PC-9 (cell line): ENCODE measurements at regions of chr10 and their contacts with region 1.

Region 1: GRCh38 chr10:35563261-35563891 is 41.8 kb upstream of the GJD4 start:
- DNase-seq: peak in 1 of 2 experiments; percentile 52
- H3K4me3 ChIP-seq: no peak overlapping the region
- H3K27ac ChIP-seq: no peak overlapping the region
- H3K4me1 ChIP-seq: no peaks in the 10 kb centered on the region
- H3K27me3 ChIP-seq: no peaks in the 10 kb centered on the region
- CTCF ChIP-seq: peak; percentile 97

Region 2: DNA sequence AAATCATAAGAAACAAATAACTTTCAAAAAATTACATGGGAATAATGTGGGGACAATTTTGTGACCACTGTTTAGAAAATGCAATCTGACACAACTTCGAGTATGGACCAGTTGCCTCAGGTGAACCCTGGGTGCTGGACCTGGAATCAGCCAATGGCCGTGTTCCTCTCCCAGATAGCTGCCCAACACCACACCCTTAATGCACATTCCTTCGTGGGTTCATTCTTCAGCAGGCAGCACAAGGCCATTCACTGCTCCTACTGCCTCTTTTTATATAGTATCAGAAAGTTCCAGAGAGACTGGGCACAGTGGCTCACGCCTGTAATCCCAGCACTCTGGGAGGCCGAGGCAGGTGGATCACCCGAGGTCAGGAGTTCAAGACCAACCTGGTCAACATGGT is 659.2 kb before region 1 on chr10:
- CTCF ChIA-PET with region 1: no interaction called
- POLR2A ChIA-PET with region 1: no interaction called
- intact Hi-C with region 1: no loop called
- DNase-seq: no peak
- H3K4me3 ChIP-seq: no peak overlapping the region
- H3K27ac ChIP-seq: no peak overlapping the region
- H3K4me1 ChIP-seq: no peaks in the 10 kb centered on the region
- H3K27me3 ChIP-seq: no peaks in the 10 kb centered on the region
- CTCF ChIP-seq: no peak

Region 3: GRCh38 chr10:35236739-35237138 is 326.6 kb before region 1 on chr10:
- CTCF ChIA-PET with region 1: no interaction called
- POLR2A ChIA-PET with region 1: no interaction called
- intact Hi-C with region 1: loop called (anchors 1 kb)
- DNase-seq: peak in 1 of 2 experiments; percentile 16
- H3K4me3 ChIP-seq: no peak overlapping the region
- H3K27ac ChIP-seq: no peak overlapping the region
- H3K4me1 ChIP-seq: no peaks in the 10 kb centered on the region
- H3K27me3 ChIP-seq: no peaks in the 10 kb centered on the region
- CTCF ChIP-seq: peak; percentile 30; the same call in 1 of the 2 replicates

Region 4: DNA sequence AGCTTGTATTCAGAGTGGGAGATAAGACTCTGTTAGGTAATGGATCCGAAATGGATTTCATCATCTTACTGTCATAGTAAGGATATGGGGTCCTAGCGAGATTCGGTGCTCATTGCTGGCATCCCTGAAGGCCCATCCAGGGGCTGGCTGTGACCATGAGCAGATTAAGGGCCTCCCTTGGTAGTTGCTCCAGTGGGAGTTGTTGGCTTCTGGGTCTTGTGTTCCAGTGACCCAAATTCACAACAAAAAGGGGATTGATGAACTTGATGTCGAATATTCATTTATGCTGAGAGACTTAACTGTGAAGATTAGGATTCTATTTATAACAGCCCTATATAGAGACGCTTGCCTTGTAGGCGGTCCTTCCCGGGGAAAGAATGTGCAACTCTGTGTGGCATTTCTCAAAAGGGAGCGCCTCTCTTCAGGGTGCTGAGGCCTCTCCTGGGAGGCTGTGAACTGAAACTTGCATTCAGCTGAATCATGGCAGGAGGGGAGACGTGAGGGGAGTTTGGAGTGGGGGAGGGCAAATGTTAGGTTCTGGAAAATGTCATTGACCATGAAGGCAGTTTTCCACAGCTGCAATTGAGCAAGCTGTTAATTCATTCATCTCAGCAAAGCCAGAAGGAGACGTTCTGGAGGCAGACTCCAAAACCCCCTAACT is 311.8 kb after region 1 on chr10:
- CTCF ChIA-PET with region 1: no interaction called
- POLR2A ChIA-PET with region 1: no interaction called
- intact Hi-C with region 1: no loop called
- DNase-seq: no peak
- H3K4me3 ChIP-seq: no peak overlapping the region
- H3K27ac ChIP-seq: no peak overlapping the region
- H3K4me1 ChIP-seq: no peaks in the 10 kb centered on the region
- H3K27me3 ChIP-seq: no peaks in the 10 kb centered on the region; the same call in 1 of the 2 replicates
- CTCF ChIP-seq: no peak